SK-N-SH (cell line): ENCODE measurements at regions of chr20 and their contacts with region 1.

Region 1: GRCh38 chr20:34129518-34130162 is 17.6 kb upstream of the EIF2S2 start:
- DNase-seq: peak; percentile 85
- H3K4me3 ChIP-seq: peak overlapping the region in 1 of 2 experiments; percentile 16; a peak in 1 of 4 replicates
- H3K27ac ChIP-seq: no peak overlapping the region
- H3K4me1 ChIP-seq: peaks cover 3 to 4% of the 10 kb centered on the region in 2 experiments; a peak in 3 of 4 replicates
- H3K27me3 ChIP-seq: no peaks in the 10 kb centered on the region
- CTCF ChIP-seq: peak; percentile 77
- EP300 ChIP-seq: no peak
- RAD21 ChIP-seq: peak; percentile 98

Region 2: DNA sequence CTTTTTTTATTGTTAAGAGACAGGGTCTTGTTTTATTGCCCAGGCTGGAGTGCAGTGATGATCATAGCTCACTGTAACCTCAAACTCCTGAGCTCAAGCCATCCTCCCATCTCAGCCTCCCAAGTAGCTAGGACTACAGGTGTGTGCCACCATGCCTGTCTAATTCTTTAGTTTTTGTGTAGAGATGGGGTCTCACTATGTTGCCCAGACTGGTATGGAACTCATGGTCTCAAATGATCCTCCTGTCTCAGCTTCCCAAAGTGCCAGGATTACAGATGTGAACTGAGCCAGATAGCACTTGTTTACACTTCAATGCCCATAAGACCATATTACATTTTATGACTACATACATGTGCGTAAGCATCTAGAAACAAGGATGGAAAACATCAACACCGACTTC is 35.7 kb before region 1 on chr20:
- CTCF ChIA-PET with region 1: interaction called, 11 read pairs
- POLR2A ChIA-PET with region 1: no interaction called
- DNase-seq: no peak
- H3K4me3 ChIP-seq: no peak overlapping the region
- H3K27ac ChIP-seq: no peak overlapping the region
- H3K4me1 ChIP-seq: peaks cover 0 to 3% of the 10 kb centered on the region in 2 experiments; a peak in 1 of 4 replicates
- H3K27me3 ChIP-seq: no peaks in the 10 kb centered on the region
- CTCF ChIP-seq: no peak
- EP300 ChIP-seq: no peak
- RAD21 ChIP-seq: no peak

Region 3: GRCh38 chr20:34111702-34112599 is 17.7 kb before region 1 on chr20 and contains the start of gene EIF2S2:
- CTCF ChIA-PET with region 1: interaction called, 25 read pairs
- POLR2A ChIA-PET with region 1: interaction called, 6 read pairs
- DNase-seq: peak; percentile 94
- H3K4me3 ChIP-seq: peak within 1 kb of the TSS; percentile 87 to 88
- H3K27ac ChIP-seq: peak within 1 kb of the TSS; percentile 94 to 97
- H3K4me1 ChIP-seq: peaks cover 7 to 21% of the 10 kb centered on the region in 2 experiments; a peak in 3 of 4 replicates
- H3K27me3 ChIP-seq: no peaks in the 10 kb centered on the region
- CTCF ChIP-seq: no peak
- EP300 ChIP-seq: no peak
- RAD21 ChIP-seq: no peak
- polyA plus RNA-seq, gene EIF2S2: 50.7 and 53.0 TPM in 2 replicates